Ascending aorta (tissue), 2 donors: ENCODE measurements at regions of chr7 and their contacts with region 1.

Region 1: DNA sequence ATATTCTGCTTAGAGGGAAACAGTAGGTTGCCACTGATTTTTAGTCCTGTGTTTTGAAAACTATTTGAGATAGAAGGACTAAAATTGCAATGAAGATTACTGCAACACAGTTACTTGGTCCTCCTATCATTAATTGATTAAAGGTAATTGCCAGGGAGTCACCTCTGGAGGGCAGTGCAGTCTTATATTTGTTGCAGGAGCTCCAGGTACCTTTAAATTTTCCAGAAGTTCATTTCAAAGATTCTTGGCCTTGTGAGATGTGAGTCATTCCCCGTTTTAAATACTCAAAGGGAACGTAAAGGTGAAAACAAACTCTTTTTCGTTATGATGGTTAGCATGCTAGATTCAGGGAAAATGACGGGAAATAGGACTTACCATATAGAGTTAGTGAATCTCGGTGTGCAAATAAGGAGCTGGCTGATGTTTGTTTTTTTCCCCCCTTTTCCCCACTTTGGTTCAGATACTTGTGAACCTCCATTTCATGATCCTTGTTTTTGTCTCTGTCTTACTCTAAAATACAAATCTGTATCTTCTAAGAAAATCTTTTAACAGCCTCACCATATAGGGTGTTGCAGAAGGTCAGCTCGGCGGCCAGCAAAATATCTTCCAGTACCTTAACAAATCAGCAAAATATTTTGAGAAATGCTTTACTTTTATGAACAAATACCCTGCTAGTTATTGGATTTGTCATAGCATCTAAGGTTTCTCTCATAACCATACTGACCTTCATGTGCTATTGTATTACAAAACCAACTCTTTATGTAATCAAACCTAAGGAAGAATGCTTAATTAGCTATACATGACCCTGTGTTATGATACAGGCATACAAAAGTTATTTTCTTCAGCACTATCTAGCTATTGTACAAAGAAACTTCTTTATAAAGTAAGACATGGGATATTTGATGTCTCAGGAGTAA is 143.0 kb upstream of the HDAC9 start:
- DNase-seq: peak in 1 of 2 donors; percentile 66
- H3K4me3 ChIP-seq: peak overlapping the region in 1 of 2 donors; percentile 10
- H3K27ac ChIP-seq: no peak overlapping the region
- H3K4me1 ChIP-seq: peaks cover 0 to 11% of the 10 kb centered on the region in 2 donors
- H3K27me3 ChIP-seq: no peaks in the 10 kb centered on the region
- CTCF ChIP-seq: peak; percentile 38 to 69 (median 52)

Region 2: GRCh38 chr7:18393465-18394118 is 41.0 kb after region 1 on chr7:
- intact Hi-C with region 1: loop called (anchors 5 kb)
- DNase-seq: no peak
- H3K4me3 ChIP-seq: no peak overlapping the region
- H3K27ac ChIP-seq: no peak overlapping the region
- H3K4me1 ChIP-seq: peaks cover 5 to 22% of the 10 kb centered on the region in 2 donors
- H3K27me3 ChIP-seq: no peaks in the 10 kb centered on the region
- CTCF ChIP-seq: no peak

Region 3: GRCh38 chr7:18570890-18571478 is 218.4 kb after region 1 on chr7:
- intact Hi-C with region 1: loop called (anchors 2 kb)
- DNase-seq: no peak
- H3K4me3 ChIP-seq: peak overlapping the region; percentile 28 to 51
- H3K27ac ChIP-seq: peak overlapping the region; percentile 41 to 50
- H3K4me1 ChIP-seq: peaks cover 0 to 31% of the 10 kb centered on the region in 2 donors
- H3K27me3 ChIP-seq: no peaks in the 10 kb centered on the region
- CTCF ChIP-seq: peak; percentile 12 to 55 (median 40)

Region 4: DNA sequence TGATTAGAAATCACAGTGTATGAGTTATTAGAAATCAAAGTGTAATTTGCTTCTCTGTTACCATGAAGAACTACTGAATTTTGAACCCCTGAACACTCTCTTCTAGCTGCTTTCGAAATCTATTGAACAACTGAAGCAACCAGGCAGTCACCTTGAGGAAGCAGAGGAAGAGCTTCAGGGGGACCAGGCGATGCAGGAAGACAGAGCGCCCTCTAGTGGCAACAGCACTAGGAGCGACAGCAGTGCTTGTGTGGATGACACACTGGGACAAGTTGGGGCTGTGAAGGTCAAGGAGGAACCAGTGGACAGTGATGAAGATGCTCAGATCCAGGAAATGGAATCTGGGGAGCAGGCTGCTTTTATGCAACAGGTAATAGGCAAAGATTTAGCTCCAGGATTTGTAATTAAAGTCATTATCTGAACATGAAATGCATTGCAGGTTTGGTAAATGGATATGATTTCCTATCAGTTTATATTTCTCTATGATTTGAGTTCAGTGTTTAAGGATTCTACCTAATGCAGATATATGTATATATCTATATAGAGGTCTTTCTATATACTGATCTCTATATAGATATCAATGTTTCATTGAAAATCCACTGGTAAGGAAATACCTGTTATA is 313.6 kb after region 1 on chr7:
- intact Hi-C with region 1: loop called (anchors 1 kb)
- DNase-seq: peak; percentile 11 to 87
- H3K4me3 ChIP-seq: no peak overlapping the region
- H3K27ac ChIP-seq: no peak overlapping the region
- H3K4me1 ChIP-seq: peaks cover 0 to 15% of the 10 kb centered on the region in 2 donors
- H3K27me3 ChIP-seq: no peaks in the 10 kb centered on the region
- CTCF ChIP-seq: peak; percentile 65 to 95 (median 92)

Region 5: DNA sequence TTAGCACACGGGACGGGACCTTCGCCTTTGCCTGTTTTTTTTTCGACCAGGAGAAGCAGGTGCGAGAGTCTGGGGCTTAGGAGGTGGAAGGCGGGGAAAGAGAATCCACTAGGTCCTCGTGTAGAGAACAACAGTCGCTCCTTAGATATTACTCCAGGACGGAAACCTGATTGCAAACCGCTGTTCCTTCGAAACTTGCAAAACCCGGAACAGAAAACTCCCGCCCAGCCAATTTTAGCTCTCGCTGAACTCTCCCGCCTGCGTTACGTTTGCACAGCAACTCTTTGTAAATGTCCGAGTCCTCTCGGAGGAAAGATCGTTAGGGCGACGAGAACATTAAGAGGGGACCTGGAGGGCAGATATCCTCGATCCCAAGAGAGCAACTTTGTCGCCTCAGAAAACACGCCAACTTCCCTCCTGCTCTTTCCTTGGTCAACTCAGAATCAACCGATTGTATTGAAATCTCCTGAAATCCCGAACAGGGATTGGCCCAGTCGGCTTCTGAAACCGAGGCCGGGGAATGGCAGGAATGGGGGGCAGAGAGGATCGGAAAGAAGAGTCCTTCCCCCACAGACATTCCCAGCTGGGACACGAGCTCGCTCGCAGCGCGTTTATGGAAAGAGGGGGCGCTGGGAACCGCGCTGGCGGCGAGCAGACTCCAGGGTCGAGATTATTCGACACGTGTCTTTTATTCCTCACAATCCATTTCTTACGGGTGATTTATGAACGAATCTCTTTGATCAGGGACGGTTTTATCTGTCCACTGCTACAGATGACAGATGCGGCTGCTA is 755.0 kb after region 1 on chr7:
- intact Hi-C with region 1: loop called (anchors 5 kb)
- DNase-seq: peak in 1 of 2 donors; percentile 75
- H3K4me3 ChIP-seq: peak overlapping the region; percentile 69 to 74
- H3K27ac ChIP-seq: peak overlapping the region; percentile 54 to 80
- H3K4me1 ChIP-seq: peaks cover 3 to 8% of the 10 kb centered on the region in 2 donors
- H3K27me3 ChIP-seq: no peaks in the 10 kb centered on the region
- CTCF ChIP-seq: no peak

Region 6: GRCh38 chr7:19665399-19666008 is 1312.9 kb after region 1 on chr7:
- intact Hi-C with region 1: loop called (anchors 10 kb)
- DNase-seq: no peak
- H3K4me3 ChIP-seq: no peak overlapping the region
- H3K27ac ChIP-seq: no peak overlapping the region
- H3K4me1 ChIP-seq: no peaks in the 10 kb centered on the region
- H3K27me3 ChIP-seq: no peaks in the 10 kb centered on the region
- CTCF ChIP-seq: peak in 2 of 3 experiments; percentile 50 to 54